Sigmoid colon (tissue), 7 donors: ENCODE measurements at regions of chr4 and their contacts with region 1.

Region 1: DNA sequence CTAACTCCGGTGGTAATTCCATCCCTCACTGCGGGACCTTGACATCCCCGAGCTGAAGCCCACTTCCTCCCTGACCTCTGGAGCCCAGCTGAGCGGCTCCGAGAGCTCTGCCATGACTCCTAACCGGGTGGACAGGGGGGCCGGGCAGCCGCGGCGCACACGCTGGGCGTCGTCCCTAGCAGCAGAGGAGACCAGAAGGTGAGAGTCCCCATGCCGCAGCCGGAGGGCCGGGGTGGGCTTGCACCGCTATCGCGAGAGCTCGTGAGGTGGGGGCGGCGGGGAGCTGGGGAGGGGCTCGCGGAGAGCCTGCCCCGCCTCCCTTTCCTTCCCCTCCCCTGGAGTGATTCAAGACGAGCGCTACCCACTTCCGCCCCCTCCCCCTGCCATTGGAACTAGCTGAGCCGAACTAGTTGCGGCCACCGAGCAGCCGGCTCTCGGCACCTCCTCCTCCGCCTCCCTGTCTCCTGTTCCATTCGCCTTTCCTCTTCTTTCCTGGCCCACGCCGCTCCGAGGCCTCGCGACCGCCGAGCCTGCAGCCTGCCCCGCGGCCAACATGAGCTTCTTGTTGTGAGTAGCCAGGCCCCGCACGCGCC is at the start of gene MOB1B:
- DNase-seq: peak; percentile 92
- H3K4me3 ChIP-seq: peak within 1 kb of the TSS; percentile 77 to 90 (median 84)
- H3K27ac ChIP-seq: peak within 1 kb of the TSS; percentile 82 to 93 (median 92)
- H3K4me1 ChIP-seq: peaks cover 0 to 15% (median 6%) of the 10 kb centered on the region in 4 donors
- H3K27me3 ChIP-seq: no peaks in the 10 kb centered on the region
- CTCF ChIP-seq: peak; percentile 4 to 34 (median 21)
- EP300 ChIP-seq: no peak
- POLR2A ChIP-seq: no peak
- total RNA-seq, gene MOB1B: 15.7 to 21.7 (median 20.0) TPM

Region 2: GRCh38 chr4:70591955-70592582 is 310.0 kb before region 1 on chr4 and contains the start of gene AMBN:
- intact Hi-C with region 1: no loop called
- DNase-seq: no peak
- H3K4me3 ChIP-seq: no peak within 1 kb of the TSS
- H3K27ac ChIP-seq: no peak within 1 kb of the TSS
- H3K4me1 ChIP-seq: no peaks in the 10 kb centered on the region
- H3K27me3 ChIP-seq: no peaks in the 10 kb centered on the region
- CTCF ChIP-seq: no peak
- EP300 ChIP-seq: no peak
- POLR2A ChIP-seq: no peak
- total RNA-seq, gene AMBN: not detected

Region 3: DNA sequence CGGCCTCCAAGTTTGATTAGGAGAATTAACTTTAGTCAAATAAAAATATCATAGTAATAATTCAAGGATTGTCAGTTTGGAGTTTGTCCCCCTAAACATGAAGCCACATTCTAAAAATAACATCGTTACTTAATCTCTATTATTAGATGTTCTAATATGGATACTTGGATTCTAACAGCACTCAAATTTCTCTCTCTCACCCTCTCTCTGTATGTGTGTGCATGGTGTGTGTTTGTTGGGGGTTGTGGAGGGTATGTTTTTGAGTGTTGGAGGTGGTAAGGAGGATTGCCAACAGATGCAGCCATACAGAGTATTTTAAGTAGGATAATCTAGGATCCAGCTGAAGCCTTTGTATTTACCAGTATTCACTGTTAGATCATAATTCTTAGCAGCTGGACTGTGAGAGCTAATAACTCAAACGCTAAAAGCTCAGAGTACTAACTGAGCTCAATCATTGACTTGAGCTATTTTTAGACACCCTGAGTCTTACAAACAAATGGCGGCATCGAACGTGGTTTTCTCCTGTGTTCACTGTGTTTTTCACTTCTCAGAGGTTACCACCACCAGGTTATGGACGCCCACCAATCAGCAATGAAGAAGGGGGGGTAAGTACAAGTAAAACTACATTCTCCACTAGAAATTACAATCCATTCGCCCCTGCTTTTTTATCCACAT is 264.7 kb before region 1 on chr4:
- intact Hi-C with region 1: no loop called
- DNase-seq: no peak
- H3K4me3 ChIP-seq: peak overlapping the region in 1 of 4 donors; percentile 8
- H3K27ac ChIP-seq: peak overlapping the region in 3 of 4 donors; percentile 1 to 36 (median 2)
- H3K4me1 ChIP-seq: peaks cover 0 to 14% (median 10%) of the 10 kb centered on the region in 4 donors
- H3K27me3 ChIP-seq: no peaks in the 10 kb centered on the region
- CTCF ChIP-seq: no peak
- EP300 ChIP-seq: no peak
- POLR2A ChIP-seq: no peak

Region 4: DNA sequence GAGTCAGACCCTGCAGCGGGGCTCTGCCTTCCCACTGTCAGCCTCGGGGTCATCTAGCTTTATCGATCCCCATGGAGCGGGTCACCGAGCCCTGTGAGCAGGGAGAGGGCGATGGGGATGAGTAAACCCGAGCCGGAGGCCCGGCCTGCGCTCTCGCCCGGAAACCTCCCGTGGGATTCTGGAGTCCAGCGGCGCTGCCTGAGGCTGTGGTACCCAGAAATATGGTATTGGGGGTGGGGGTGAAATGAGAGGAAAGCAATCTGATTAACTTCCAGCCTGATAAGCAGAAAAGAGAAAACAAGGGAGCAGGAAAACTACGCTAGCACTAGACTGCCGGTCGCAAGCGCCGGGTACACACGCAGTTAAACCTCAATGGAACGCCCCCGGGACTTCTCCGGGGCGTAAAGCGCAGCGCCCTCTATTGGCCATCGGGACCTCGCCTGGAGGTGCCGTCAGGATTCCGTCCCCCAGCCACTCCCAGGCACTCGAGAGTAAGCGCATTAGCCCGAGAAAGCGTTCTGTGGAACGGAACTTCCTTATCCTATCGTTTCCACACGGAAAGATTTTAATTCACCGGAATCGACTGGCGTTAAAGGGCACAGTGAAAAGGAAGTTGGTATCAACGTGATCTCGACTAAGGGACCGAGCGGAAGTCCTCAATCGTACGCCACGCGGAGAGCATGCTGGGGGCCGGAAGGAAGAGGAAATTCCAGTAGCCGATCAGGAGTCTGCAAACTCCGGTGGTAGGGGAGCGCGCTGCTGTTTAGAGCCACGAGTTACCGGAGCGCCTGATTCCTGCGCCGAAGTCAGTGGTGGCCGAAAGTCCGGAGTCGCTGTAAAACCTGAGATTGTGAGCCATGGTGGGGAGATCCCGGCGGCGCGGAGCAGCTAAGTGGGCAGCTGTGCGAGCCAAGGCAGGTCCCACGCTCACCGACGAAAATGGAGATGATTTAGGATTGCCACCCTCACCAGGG is 214.0 kb before region 1 on chr4 and contains the start of gene UTP3:
- intact Hi-C with region 1: loop called (anchors 5 kb)
- DNase-seq: peak; percentile 98
- H3K4me3 ChIP-seq: peak within 1 kb of the TSS; percentile 66 to 94 (median 79)
- H3K27ac ChIP-seq: peak within 1 kb of the TSS; percentile 93 to 95 (median 94)
- H3K4me1 ChIP-seq: peaks cover 0 to 35% (median 32%) of the 10 kb centered on the region in 4 donors
- H3K27me3 ChIP-seq: no peaks in the 10 kb centered on the region
- CTCF ChIP-seq: peak; percentile 78 to 95 (median 92)
- EP300 ChIP-seq: peak in 2 of 4 donors; percentile 25 to 50
- POLR2A ChIP-seq: peak; percentile 44 to 58
- total RNA-seq, gene UTP3: 15.3 to 19.7 (median 15.6) TPM

Region 5: GRCh38 chr4:70704331-70705145 is 197.5 kb before region 1 on chr4:
- intact Hi-C with region 1: loop called (anchors 5 kb)
- DNase-seq: peak; percentile 90
- H3K4me3 ChIP-seq: peak overlapping the region; percentile 66 to 91 (median 84)
- H3K27ac ChIP-seq: peak overlapping the region; percentile 92 to 98 (median 97)
- H3K4me1 ChIP-seq: peaks cover 0 to 30% (median 19%) of the 10 kb centered on the region in 4 donors
- H3K27me3 ChIP-seq: no peaks in the 10 kb centered on the region
- CTCF ChIP-seq: peak in 3 of 4 experiments; percentile 14 to 31 (median 16)
- EP300 ChIP-seq: no peak
- POLR2A ChIP-seq: no peak

Region 6: DNA sequence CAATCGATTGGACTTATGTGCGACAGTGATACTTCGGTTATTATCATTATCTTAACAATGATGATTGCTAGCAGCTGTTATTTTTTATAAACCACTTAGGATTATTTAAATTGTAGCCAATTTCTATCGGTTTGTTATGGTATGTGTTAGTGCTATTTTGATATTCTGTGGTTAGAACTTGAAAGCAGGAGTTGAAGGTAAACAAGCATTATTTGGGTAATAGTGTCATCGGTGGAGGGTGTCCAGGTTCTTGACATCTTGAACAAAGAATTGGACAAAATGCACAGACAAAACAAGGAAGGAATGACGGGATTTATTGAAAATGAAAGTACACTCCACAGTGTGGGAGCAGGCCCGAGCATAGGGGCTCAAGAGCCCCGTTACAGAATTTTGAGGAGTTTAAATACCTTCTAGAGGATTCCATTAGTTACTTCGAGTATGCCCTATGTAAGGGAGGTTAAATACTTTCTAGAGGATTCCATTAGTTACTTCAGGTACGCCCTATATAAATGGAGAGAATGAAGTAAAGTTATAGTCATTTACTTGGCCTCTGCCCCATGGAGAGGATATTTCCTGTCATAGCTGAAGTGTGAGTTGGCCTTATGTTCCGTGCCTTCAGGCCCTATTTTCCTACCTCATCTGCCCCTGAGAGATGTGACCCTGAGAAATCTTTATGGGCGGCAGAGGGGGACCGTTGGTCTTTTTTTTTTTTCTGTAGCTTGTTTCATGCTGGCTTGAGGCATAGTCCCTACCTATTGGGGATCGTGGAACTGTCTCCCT is 13.1 kb after region 1 on chr4:
- intact Hi-C with region 1: no loop called
- DNase-seq: no peak
- H3K4me3 ChIP-seq: no peak overlapping the region
- H3K27ac ChIP-seq: no peak overlapping the region
- H3K4me1 ChIP-seq: peaks cover 0 to 25% (median 11%) of the 10 kb centered on the region in 4 donors
- H3K27me3 ChIP-seq: no peaks in the 10 kb centered on the region
- CTCF ChIP-seq: no peak
- EP300 ChIP-seq: no peak
- POLR2A ChIP-seq: no peak

Region 7: DNA sequence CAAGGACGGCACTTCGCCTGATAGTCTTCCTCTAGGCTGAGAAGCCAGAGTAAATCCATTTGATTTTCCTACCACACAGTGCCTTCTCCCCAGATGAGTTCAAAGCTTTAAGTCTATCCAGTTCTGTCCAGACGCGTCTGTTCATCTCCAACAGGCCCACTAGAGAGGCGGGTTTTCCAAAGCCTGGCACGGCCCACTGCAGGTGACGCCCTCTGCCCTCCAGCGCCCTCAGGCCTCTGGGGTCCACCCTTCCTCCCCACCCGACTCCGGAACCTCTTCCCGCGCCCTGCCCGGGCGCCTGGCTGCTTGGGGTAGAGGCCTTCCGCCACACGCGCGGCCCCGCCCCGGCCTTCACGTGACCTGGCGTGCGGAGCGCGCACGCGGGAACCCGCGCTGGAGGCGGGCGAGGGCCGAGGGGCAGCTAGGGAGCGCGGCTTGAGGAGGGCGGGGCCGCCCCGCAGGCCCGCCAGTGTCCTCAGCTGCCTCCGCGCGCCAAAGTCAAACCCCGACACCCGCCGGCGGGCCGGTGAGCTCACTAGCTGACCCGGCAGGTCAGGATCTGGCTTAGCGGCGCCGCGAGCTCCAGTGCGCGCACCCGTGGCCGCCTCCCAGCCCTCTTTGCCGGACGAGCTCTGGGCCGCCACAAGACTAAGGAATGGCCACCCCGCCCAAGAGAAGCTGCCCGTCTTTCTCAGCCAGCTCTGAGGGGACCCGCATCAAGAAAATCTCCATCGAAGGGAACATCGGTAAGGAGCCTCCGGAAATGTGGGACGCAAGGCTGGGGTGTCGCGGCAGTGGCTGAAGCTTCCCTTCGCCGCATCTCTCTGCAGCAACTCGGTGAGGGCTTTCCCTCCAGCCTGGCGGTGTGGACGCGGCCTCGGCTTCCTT is 91.3 kb after region 1 on chr4 and contains the start of gene DCK:
- intact Hi-C with region 1: loop called (anchors 1 kb)
- DNase-seq: peak; percentile 93
- H3K4me3 ChIP-seq: peak within 1 kb of the TSS; percentile 61 to 85 (median 75)
- H3K27ac ChIP-seq: peak within 1 kb of the TSS; percentile 84 to 88 (median 86)
- H3K4me1 ChIP-seq: peaks cover 0 to 45% (median 23%) of the 10 kb centered on the region in 4 donors
- H3K27me3 ChIP-seq: no peaks in the 10 kb centered on the region
- CTCF ChIP-seq: no peak
- EP300 ChIP-seq: no peak
- POLR2A ChIP-seq: peak; percentile 57 to 70
- total RNA-seq, gene DCK: 10.0 to 18.5 (median 13.9) TPM

Region 8: DNA sequence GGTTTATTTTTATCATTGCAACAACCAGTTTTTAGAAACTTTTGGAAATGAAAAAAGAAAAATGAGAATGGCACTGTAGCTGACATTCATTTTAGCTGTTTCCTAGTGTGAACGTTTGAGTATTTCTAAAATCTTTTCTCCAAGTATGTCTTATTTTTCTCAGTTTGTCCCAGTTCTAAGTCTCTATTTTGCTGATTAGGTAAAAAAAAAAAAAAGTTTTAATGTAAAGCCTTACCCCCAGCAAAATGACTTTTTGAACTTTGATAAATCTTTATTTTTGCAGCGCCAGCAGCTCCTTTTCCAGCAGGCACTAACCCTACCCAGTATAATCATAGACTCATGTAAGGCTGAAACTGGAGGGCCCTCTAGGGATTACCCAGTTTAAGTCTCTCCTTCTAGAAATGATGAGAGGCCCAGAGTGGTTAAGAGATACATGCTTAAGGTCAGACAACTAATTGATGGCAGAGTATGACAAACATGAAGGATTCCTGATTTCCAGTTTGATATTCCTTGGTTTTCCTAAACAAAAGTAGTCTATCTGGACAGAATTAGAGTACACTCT is 352.5 kb after region 1 on chr4:
- intact Hi-C with region 1: no loop called
- DNase-seq: no peak
- H3K4me3 ChIP-seq: no peak overlapping the region
- H3K27ac ChIP-seq: no peak overlapping the region
- H3K4me1 ChIP-seq: peaks cover 0 to 6% (median 0%) of the 10 kb centered on the region in 4 donors
- H3K27me3 ChIP-seq: no peaks in the 10 kb centered on the region
- CTCF ChIP-seq: no peak
- EP300 ChIP-seq: no peak
- POLR2A ChIP-seq: no peak